ENCODE measurements at regions of chr14 and their contacts with region 1.

Region 1: DNA sequence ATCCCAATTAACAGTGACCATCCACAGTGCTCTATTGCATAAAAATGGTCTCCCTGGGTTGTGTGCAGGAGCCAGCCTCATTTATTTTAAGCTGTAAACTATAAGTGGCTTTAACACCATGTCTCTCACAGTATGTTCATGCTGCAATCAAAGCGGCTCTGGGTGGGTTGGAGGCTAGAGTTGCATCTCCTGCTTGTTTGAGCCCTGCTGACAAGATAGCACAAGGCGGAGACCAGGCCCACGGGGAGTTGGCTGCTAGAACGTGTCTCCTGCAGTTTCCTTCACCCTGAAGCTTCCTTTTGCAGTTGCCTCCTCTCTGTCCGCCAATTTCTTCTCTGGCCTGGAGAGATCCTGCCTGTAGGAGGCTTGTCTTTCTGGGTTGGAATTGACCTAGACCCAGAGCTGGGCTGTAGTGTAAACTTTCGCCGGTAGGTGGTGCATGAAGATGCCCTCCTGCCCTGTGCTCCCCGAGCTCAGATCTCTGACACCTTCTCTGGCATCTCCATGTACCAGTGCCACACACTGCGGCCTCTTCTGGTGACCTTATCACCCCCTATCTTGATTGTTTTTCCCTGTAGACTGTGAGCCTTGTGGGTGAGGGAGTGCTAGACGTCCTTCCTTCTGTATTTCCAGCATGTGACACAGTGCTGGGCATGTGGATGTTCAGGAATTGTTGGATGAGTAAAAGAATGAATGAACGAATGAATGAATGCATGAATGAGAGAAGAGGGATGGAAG is 10.3 kb downstream of the OTUB2 start:
- DNase-seq: peak; percentile 78
- ATAC-seq: peak; percentile 93
- H3K4me3 ChIP-seq: no peak overlapping the region
- H3K4me3 Mint-ChIP-seq: no peak overlapping the region
- H3K27ac ChIP-seq: no peak overlapping the region
- H3K27ac Mint-ChIP-seq: no peak overlapping the region
- H3K4me1 ChIP-seq: no peaks in the 10 kb centered on the region
- H3K4me1 Mint-ChIP-seq: peaks cover 2% of the 10 kb centered on the region
- H3K27me3 ChIP-seq: no peaks in the 10 kb centered on the region
- H3K27me3 Mint-ChIP-seq: no peaks in the 10 kb centered on the region
- CTCF ChIP-seq: peak; percentile 87

Region 2: GRCh38 chr14:93702946-93703345 is 333.5 kb before region 1 on chr14:
- CTCF ChIA-PET with region 1: no interaction called
- POLR2A ChIA-PET with region 1: no interaction called
- intact Hi-C with region 1: no loop called
- DNase-seq: no peak
- ATAC-seq: no peak
- H3K4me3 ChIP-seq: no peak overlapping the region
- H3K4me3 Mint-ChIP-seq: no peak overlapping the region
- H3K27ac ChIP-seq: no peak overlapping the region
- H3K27ac Mint-ChIP-seq: no peak overlapping the region
- H3K4me1 ChIP-seq: no peaks in the 10 kb centered on the region
- H3K4me1 Mint-ChIP-seq: no peaks in the 10 kb centered on the region
- H3K27me3 ChIP-seq: no peaks in the 10 kb centered on the region
- H3K27me3 Mint-ChIP-seq: peaks cover 21% of the 10 kb centered on the region
- CTCF ChIP-seq: no peak

Region 3: GRCh38 chr14:93939304-93940229 is 96.9 kb before region 1 on chr14:
- CTCF ChIA-PET with region 1: interaction called, 12 read pairs
- POLR2A ChIA-PET with region 1: no interaction called
- intact Hi-C with region 1: no loop called
- DNase-seq: peak; percentile 93
- ATAC-seq: peak; percentile 95
- H3K4me3 ChIP-seq: peak overlapping the region in 4 of 5 experiments; percentile 28 to 50 (median 47)
- H3K4me3 Mint-ChIP-seq: peak overlapping the region; percentile 78
- H3K27ac ChIP-seq: no peak overlapping the region
- H3K27ac Mint-ChIP-seq: no peak overlapping the region
- H3K4me1 ChIP-seq: peaks cover 5 to 11% of the 10 kb centered on the region in 2 donors
- H3K4me1 Mint-ChIP-seq: peaks cover 14% of the 10 kb centered on the region
- H3K27me3 ChIP-seq: peaks cover 0 to 11% (median 2%) of the 10 kb centered on the region in 4 experiments
- H3K27me3 Mint-ChIP-seq: peaks cover 10% of the 10 kb centered on the region
- CTCF ChIP-seq: peak; percentile 99

Region 4: GRCh38 chr14:94026173-94026888 is 10.2 kb before region 1 on chr14 and contains the start of gene OTUB2:
- CTCF ChIA-PET with region 1: interaction called, 34 read pairs
- POLR2A ChIA-PET with region 1: interaction called, 3 read pairs
- intact Hi-C with region 1: no loop called
- DNase-seq: peak; percentile 98
- ATAC-seq: peak; percentile 100
- H3K4me3 ChIP-seq: peak within 1 kb of the TSS in 4 of 5 experiments; percentile 38 to 64 (median 58)
- H3K4me3 Mint-ChIP-seq: peak within 1 kb of the TSS; percentile 90
- H3K27ac ChIP-seq: no peak within 1 kb of the TSS
- H3K27ac Mint-ChIP-seq: peak within 1 kb of the TSS; percentile 70
- H3K4me1 ChIP-seq: peaks cover 9% of the 10 kb centered on the region in 2 donors
- H3K4me1 Mint-ChIP-seq: peaks cover 8% of the 10 kb centered on the region
- H3K27me3 ChIP-seq: peaks cover 0 to 22% (median 9%) of the 10 kb centered on the region in 4 experiments
- H3K27me3 Mint-ChIP-seq: peaks cover 22% of the 10 kb centered on the region
- CTCF ChIP-seq: no peak
- total RNA-seq, gene OTUB2: 0.17 and 0.19 TPM in 2 replicates

Region 5: DNA sequence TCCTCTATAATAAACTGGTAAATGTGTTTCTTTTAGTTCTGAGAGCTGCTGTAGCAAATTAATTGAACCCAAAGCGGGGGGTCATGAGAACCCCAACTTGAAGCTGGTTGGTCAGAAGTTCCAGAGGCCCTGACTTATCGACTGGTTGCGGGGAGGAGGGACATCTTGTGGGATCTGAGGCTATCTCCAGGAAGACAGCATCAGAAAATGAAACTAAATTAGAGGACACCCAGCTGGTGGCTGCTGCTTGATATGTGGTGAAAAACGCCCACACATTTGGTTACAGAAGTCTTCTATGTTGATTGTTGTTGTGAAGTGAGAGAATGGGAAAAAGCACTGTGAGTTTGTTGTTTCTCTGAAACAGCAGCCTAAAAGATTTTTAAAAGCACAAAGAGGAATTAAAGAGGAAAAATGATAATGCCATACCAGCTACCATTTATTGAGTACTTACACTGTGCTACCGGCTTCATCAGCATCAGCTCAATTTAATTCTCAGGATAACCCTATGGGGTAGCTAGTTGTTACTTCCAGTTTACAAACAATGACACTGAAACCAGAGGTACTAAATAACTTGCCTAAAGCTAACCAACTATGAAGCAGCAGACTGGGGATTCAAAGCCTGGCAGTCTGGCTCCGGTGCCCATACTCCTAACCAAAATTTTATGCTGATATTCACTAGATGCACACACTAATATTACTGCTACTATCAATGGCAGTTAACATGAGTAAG is 20.3 kb after region 1 on chr14:
- CTCF ChIA-PET with region 1: interaction called, 37 read pairs
- POLR2A ChIA-PET with region 1: no interaction called
- intact Hi-C with region 1: no loop called
- DNase-seq: no peak
- ATAC-seq: no peak
- H3K4me3 ChIP-seq: no peak overlapping the region
- H3K4me3 Mint-ChIP-seq: no peak overlapping the region
- H3K27ac ChIP-seq: no peak overlapping the region
- H3K27ac Mint-ChIP-seq: no peak overlapping the region
- H3K4me1 ChIP-seq: peaks cover 0 to 9% of the 10 kb centered on the region in 2 donors
- H3K4me1 Mint-ChIP-seq: peaks cover 10% of the 10 kb centered on the region
- H3K27me3 ChIP-seq: no peaks in the 10 kb centered on the region
- H3K27me3 Mint-ChIP-seq: no peaks in the 10 kb centered on the region
- CTCF ChIP-seq: no peak

Region 6: GRCh38 chr14:94080471-94081289 is 44.2 kb after region 1 on chr14 and contains the start of gene DDX24:
- CTCF ChIA-PET with region 1: interaction called, 3 read pairs
- POLR2A ChIA-PET with region 1: no interaction called
- intact Hi-C with region 1: loop called (anchors 1 kb)
- DNase-seq: peak; percentile 97
- ATAC-seq: peak; percentile 97
- H3K4me3 ChIP-seq: peak within 1 kb of the TSS; percentile 91 to 99 (median 97)
- H3K4me3 Mint-ChIP-seq: peak within 1 kb of the TSS; percentile 97
- H3K27ac ChIP-seq: peak within 1 kb of the TSS; percentile 83 to 93
- H3K27ac Mint-ChIP-seq: peak within 1 kb of the TSS; percentile 97
- H3K4me1 ChIP-seq: peaks cover 36 to 45% of the 10 kb centered on the region in 2 donors
- H3K4me1 Mint-ChIP-seq: peaks cover 46% of the 10 kb centered on the region
- H3K27me3 ChIP-seq: no peaks in the 10 kb centered on the region
- H3K27me3 Mint-ChIP-seq: no peaks in the 10 kb centered on the region
- CTCF ChIP-seq: no peak
- total RNA-seq, gene DDX24: 191 and 211 TPM in 2 replicates

Region 7: GRCh38 chr14:94136575-94137331 is 100.3 kb after region 1 on chr14:
- CTCF ChIA-PET with region 1: interaction called, 195 read pairs
- POLR2A ChIA-PET with region 1: no interaction called
- intact Hi-C with region 1: loop called (anchors 1 kb)
- DNase-seq: peak; percentile 83
- ATAC-seq: peak; percentile 91
- H3K4me3 ChIP-seq: no peak overlapping the region
- H3K4me3 Mint-ChIP-seq: no peak overlapping the region
- H3K27ac ChIP-seq: no peak overlapping the region
- H3K27ac Mint-ChIP-seq: no peak overlapping the region
- H3K4me1 ChIP-seq: peaks cover 0 to 3% of the 10 kb centered on the region in 2 donors
- H3K4me1 Mint-ChIP-seq: peaks cover 2% of the 10 kb centered on the region
- H3K27me3 ChIP-seq: peaks cover 0 to 10% (median 1%) of the 10 kb centered on the region in 4 experiments
- H3K27me3 Mint-ChIP-seq: peaks cover 27% of the 10 kb centered on the region
- CTCF ChIP-seq: peak; percentile 94

Region 8: DNA sequence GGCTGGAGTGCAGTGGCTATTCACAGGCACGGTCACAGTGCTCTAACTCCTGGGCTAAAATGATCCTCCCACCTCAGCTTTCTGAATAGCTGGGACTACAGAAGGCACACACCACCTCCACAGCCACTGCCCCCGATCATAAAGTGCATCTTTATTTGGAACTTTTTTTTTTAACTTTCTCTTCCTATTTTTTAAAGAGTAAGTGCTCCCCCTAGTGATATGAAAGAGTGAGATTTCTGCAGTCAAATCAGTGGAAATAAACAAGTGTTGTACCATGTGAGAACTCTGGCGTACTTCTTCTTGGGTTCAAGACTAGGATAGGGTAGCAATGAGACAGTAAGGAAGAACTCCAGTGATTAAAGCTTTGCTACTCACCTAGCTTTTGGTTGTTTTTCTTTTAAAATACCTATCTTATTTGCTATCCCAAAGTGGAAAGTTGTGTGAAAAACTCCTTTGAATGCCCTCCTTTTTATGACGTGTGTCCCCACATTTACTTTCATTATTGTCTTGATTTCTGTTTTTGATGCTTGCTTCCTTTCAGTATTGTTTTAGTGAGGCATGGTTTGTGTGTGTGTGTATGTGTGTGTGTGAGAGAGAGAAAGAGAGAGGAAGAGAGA is 144.3 kb after region 1 on chr14:
- CTCF ChIA-PET with region 1: interaction called, 154 read pairs
- POLR2A ChIA-PET with region 1: no interaction called
- intact Hi-C with region 1: loop called (anchors 1 kb)
- DNase-seq: peak; percentile 78
- ATAC-seq: peak; percentile 84
- H3K4me3 ChIP-seq: peak overlapping the region in 3 of 5 experiments; percentile 10 to 35 (median 20)
- H3K4me3 Mint-ChIP-seq: peak overlapping the region; percentile 8
- H3K27ac ChIP-seq: no peak overlapping the region
- H3K27ac Mint-ChIP-seq: peak overlapping the region; percentile 4
- H3K4me1 ChIP-seq: peaks cover 5 to 7% of the 10 kb centered on the region in 2 donors
- H3K4me1 Mint-ChIP-seq: peaks cover 6% of the 10 kb centered on the region
- H3K27me3 ChIP-seq: peaks cover 2 to 32% (median 17%) of the 10 kb centered on the region in 4 experiments
- H3K27me3 Mint-ChIP-seq: peaks cover 40% of the 10 kb centered on the region
- CTCF ChIP-seq: peak; percentile 82

Region 9: GRCh38 chr14:94203473-94204210 is 167.2 kb after region 1 on chr14:
- CTCF ChIA-PET with region 1: no interaction called
- POLR2A ChIA-PET with region 1: no interaction called
- intact Hi-C with region 1: no loop called
- DNase-seq: no peak
- ATAC-seq: no peak
- H3K4me3 ChIP-seq: no peak overlapping the region
- H3K4me3 Mint-ChIP-seq: no peak overlapping the region
- H3K27ac ChIP-seq: no peak overlapping the region
- H3K27ac Mint-ChIP-seq: no peak overlapping the region
- H3K4me1 ChIP-seq: no peaks in the 10 kb centered on the region
- H3K4me1 Mint-ChIP-seq: no peaks in the 10 kb centered on the region
- H3K27me3 ChIP-seq: peaks cover 0 to 13% (median 0%) of the 10 kb centered on the region in 4 experiments
- H3K27me3 Mint-ChIP-seq: peaks cover 45% of the 10 kb centered on the region
- CTCF ChIP-seq: no peak